ENCODE measurements at regions of chr21 and their contacts with region 1.

Region 1: DNA sequence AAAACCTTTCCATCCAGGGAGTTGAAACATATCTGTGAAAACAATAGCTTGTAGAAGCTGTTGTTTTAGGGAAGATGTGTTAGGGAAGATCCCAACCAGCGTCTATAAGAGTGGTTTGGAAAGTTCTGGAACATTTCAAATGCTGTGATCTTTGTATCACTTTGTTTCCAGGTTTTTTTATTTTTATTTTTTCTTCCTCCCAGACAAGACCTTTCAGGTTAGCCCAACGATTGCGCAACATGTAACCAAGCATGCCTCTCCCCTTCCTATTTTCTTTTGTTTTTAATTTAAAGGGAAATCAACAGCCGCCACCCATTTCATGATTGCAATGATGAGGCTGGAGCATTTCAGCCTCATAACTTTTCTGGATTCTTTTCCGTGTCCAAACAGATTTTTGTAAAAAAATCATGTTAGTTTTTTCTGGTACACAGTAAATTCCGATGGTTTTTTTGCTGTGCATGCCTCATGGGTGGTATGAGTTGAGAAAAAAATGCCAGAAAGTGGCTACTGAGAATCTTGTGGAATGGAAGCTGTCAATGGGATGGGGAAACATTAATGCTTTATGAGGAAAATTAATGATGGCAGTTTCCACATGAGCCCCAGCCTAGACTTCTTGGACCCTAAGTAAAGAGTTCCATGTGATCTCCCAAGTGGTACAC is 109.3 kb downstream of the RUNX1 start:
- DNase-seq: no peak

Region 2: GRCh38 chr21:34965200-34966174 is 25.7 kb after region 1 on chr21:
- intact Hi-C with region 1: loop called in 1 of 2 experiments (anchors 1 kb)
- DNase-seq: no peak

Region 3: GRCh38 chr21:34983680-34984086 is 43.9 kb after region 1 on chr21:
- intact Hi-C with region 1: no loop called
- DNase-seq: no peak